B cell (primary cell): ENCODE measurements at regions of chr2 and their contacts with region 1.

Region 1: GRCh38 chr2:64859312-64860212 is 129.6 kb upstream of the SLC1A4 start:
- DNase-seq: peak; percentile 69
- ATAC-seq: peak; percentile 11
- H3K4me3 ChIP-seq: peak overlapping the region; percentile 61 to 79 (median 67)
- H3K4me3 Mint-ChIP-seq: peak overlapping the region; percentile 79
- H3K27ac ChIP-seq: peak overlapping the region; percentile 91 to 93
- H3K27ac Mint-ChIP-seq: no peak overlapping the region
- H3K4me1 ChIP-seq: peaks cover 76 to 80% of the 10 kb centered on the region in 2 donors
- H3K4me1 Mint-ChIP-seq: peaks cover 28% of the 10 kb centered on the region
- H3K27me3 ChIP-seq: no peaks in the 10 kb centered on the region
- H3K27me3 Mint-ChIP-seq: no peaks in the 10 kb centered on the region
- CTCF ChIP-seq: no peak

Region 2: GRCh38 chr2:64554117-64554516 is 305.4 kb before region 1 on chr2:
- CTCF ChIA-PET with region 1: no interaction called
- POLR2A ChIA-PET with region 1: no interaction called
- intact Hi-C with region 1: no loop called
- DNase-seq: no peak
- ATAC-seq: no peak
- H3K4me3 ChIP-seq: no peak overlapping the region
- H3K4me3 Mint-ChIP-seq: no peak overlapping the region
- H3K27ac ChIP-seq: no peak overlapping the region
- H3K27ac Mint-ChIP-seq: no peak overlapping the region
- H3K4me1 ChIP-seq: no peaks in the 10 kb centered on the region
- H3K4me1 Mint-ChIP-seq: peaks cover 37% of the 10 kb centered on the region
- H3K27me3 ChIP-seq: no peaks in the 10 kb centered on the region
- H3K27me3 Mint-ChIP-seq: no peaks in the 10 kb centered on the region
- CTCF ChIP-seq: no peak

Region 3: DNA sequence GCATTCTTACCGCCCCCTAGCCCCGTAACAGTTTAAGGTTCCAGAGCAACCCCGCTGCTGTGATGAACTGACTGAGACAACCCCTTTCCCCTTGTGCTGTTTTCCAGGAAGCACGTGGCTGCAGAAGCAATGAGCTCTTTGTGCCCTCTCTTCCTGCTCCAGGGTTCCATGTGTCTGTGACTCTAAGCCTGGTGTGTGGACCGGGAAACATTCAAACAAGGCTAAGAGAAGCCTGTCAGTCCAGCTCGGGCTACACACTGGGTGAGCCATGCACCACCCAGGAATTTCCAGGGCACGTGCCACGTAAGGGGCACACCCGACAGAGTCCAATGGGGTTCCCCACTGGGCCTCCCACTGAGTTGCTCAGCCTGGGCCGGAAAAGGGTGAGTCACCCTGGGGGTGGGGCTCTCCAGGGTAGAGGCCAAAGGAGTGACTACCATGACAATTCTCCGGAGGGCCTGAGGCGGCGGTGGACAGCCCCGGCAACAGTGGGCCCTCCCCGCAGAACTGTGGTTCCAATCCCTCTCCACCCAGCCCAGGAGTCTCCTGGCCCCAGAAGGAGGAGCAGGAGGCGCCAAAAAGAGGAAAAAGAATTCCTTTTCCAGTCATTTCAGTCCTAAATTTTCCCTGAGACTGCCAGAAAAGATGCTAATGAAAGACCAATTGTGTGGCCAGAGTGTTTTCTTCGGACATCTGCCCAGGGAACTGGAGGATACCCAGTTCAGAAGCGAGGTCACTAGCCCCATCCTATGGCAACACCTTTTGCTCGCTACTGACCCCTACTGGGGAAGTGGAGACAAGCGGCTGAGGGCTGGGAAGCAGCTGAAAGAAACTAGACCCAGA is 28.2 kb before region 1 on chr2:
- CTCF ChIA-PET with region 1: interaction called, 67 read pairs
- POLR2A ChIA-PET with region 1: interaction called, 3 read pairs
- intact Hi-C with region 1: no loop called
- DNase-seq: peak; percentile 82
- ATAC-seq: peak; percentile 91
- H3K4me3 ChIP-seq: peak overlapping the region in 3 of 5 experiments; percentile 11 to 38 (median 16)
- H3K4me3 Mint-ChIP-seq: peak overlapping the region; percentile 63
- H3K27ac ChIP-seq: no peak overlapping the region
- H3K27ac Mint-ChIP-seq: peak overlapping the region; percentile 77
- H3K4me1 ChIP-seq: peaks cover 8 to 12% of the 10 kb centered on the region in 2 donors
- H3K4me1 Mint-ChIP-seq: peaks cover 13% of the 10 kb centered on the region
- H3K27me3 ChIP-seq: no peaks in the 10 kb centered on the region
- H3K27me3 Mint-ChIP-seq: no peaks in the 10 kb centered on the region
- CTCF ChIP-seq: peak; percentile 96

Region 4: DNA sequence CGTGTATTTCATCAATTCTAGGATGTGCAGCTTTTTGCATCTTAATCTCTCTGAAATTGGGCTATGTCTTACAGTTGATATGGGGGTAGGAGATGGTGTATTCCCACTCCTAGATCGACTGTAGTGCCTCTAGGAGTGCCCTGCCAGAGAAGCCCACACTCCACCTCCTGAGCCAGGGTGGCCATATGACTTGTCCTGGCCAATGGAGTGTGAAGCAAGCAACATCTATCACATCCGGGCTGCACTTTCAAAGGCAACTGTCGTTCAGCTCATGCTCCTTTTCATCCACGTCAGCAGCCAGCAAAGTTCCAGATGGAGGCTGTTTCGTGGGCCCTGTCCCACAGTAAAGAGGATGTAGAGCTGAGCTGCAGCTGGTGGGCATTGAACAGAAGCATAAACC is 19.7 kb before region 1 on chr2:
- CTCF ChIA-PET with region 1: interaction called, 8 read pairs
- POLR2A ChIA-PET with region 1: interaction called, 24 read pairs
- intact Hi-C with region 1: loop called (anchors 1 kb)
- DNase-seq: peak; percentile 89
- ATAC-seq: peak; percentile 89
- H3K4me3 ChIP-seq: peak overlapping the region in 1 of 5 experiments; percentile 0
- H3K4me3 Mint-ChIP-seq: peak overlapping the region; percentile 74
- H3K27ac ChIP-seq: peak overlapping the region; percentile 79 to 83
- H3K27ac Mint-ChIP-seq: peak overlapping the region; percentile 97
- H3K4me1 ChIP-seq: peaks cover 40 to 59% of the 10 kb centered on the region in 2 donors
- H3K4me1 Mint-ChIP-seq: peaks cover 45% of the 10 kb centered on the region
- H3K27me3 ChIP-seq: no peaks in the 10 kb centered on the region
- H3K27me3 Mint-ChIP-seq: no peaks in the 10 kb centered on the region
- CTCF ChIP-seq: no peak

Region 5: DNA sequence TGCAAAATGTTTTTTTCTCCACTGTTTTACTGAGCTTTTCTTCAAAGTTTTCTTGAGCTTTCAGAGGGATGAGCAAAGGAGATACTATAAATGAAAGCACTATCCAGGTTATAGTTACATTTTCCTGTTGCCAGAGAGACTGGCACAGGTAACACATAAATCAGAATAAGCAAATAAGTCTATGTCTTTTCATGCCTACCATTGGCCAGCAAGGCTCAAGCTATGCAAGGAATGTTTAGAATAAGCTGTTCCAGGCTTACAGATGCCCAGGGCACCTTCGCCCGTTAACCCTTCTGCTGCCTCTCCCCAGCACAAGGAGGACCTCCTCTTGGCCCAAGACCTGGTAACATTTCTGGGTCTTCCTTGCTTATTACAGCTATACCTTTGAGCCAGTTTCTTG is 1341.6 kb after region 1 on chr2:
- CTCF ChIA-PET with region 1: no interaction called
- POLR2A ChIA-PET with region 1: no interaction called
- intact Hi-C with region 1: no loop called
- DNase-seq: no peak
- ATAC-seq: no peak
- H3K4me3 ChIP-seq: no peak overlapping the region
- H3K4me3 Mint-ChIP-seq: no peak overlapping the region
- H3K27ac ChIP-seq: no peak overlapping the region
- H3K27ac Mint-ChIP-seq: no peak overlapping the region
- H3K4me1 ChIP-seq: no peaks in the 10 kb centered on the region
- H3K4me1 Mint-ChIP-seq: no peaks in the 10 kb centered on the region
- H3K27me3 ChIP-seq: no peaks in the 10 kb centered on the region
- H3K27me3 Mint-ChIP-seq: no peaks in the 10 kb centered on the region
- CTCF ChIP-seq: no peak